PC-9 (cell line): ENCODE measurements at regions of chr14 and their contacts with region 1.

Region 1: DNA sequence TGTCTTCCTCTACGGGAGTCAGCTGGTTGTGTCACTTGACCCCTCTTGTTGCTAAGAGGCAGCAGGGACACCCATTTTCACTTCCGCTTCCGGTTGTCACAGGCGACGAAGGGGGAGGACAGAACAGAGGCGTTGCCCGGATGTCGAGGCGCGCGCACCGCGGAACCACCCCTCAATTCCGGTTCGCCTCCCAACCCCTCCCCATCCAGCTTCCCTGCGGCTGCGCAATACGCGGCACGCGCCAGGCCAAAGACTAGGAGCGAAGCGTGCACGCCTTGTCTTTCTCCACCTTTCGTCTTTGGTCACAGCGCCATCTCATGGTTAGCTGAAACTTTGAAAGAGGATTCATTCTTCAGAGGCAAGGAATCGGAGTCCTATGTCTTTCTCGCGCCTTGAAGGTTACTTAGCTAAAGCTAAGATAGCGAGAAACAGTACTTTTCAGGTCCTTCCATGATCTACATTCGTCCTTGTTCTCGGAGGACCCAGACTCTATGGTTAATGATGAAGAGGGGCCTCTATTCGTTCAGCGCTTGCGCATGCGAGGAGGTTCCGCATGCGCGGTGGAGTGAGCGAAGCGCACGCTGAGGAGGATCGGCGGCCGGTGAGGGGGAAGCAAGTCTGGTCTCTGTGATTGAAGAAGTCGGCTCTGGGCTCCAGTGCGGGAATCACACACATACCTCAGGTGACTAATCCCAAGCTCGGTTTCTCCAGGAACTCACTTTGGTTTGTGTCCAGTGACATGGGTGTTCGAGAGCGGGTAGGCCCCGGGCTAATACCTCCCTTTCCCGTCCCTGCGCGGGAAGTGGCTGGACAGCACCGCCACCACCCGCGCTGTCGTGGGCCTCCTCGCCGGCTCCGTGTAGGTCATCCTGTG is at the starts of genes ATP6V1D and EIF2S1:
- DNase-seq: peak; percentile 97 to 100
- H3K4me3 ChIP-seq: peak within 1 kb of the TSS; percentile 75
- H3K27ac ChIP-seq: peak within 1 kb of the TSS; percentile 71
- H3K4me1 ChIP-seq: peaks cover 44% of the 10 kb centered on the region
- H3K27me3 ChIP-seq: no peaks in the 10 kb centered on the region
- CTCF ChIP-seq: peak; percentile 100
- total RNA-seq, gene ATP6V1D: 62.7 and 67.9 TPM in 2 replicates
- total RNA-seq, gene EIF2S1: 144 and 146 TPM in 2 replicates

Region 2: GRCh38 chr14:66507722-66508546 is 852.1 kb before region 1 on chr14 and contains the start of gene GPHN:
- CTCF ChIA-PET with region 1: no interaction called
- POLR2A ChIA-PET with region 1: interaction called, 4 read pairs
- intact Hi-C with region 1: loop called (anchors 5 kb)
- DNase-seq: peak; percentile 94 to 98
- H3K4me3 ChIP-seq: peak within 1 kb of the TSS; percentile 76
- H3K27ac ChIP-seq: peak within 1 kb of the TSS; percentile 79
- H3K4me1 ChIP-seq: peaks cover 33% of the 10 kb centered on the region
- H3K27me3 ChIP-seq: no peaks in the 10 kb centered on the region
- CTCF ChIP-seq: peak; percentile 26; the same call in 1 of the 2 replicates
- total RNA-seq, gene GPHN: 18.3 and 20.5 TPM in 2 replicates

Region 3: DNA sequence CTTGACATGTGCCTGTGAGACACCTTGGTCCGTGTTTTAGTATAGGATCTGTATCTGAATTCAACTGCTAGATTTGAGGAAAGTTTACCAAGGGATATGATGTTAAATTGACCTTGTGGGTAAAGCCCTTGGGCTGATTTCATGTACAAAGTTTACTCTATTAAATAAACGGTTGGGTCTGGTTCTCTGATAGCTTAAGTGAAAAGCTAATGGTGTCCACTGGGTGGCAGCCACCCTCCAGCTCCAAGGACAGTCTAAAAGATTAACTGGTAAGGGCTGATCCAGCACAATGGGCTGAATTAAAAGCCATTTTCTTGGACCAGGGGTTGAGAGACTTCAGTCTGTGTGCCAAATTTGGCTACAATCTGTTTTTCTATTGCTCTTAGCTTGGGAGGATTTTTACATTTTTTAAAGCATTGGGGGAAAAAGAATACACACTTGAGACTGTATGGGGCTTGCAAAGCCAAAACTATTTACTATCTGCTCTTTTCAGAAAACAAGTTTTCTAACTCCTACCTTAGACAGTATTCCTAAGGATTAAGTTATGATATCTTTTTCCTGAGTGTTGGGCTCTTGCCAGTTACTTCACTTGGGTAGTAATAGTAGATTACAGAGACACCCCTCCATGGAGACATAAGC is 735.6 kb before region 1 on chr14:
- CTCF ChIA-PET with region 1: no interaction called
- POLR2A ChIA-PET with region 1: no interaction called
- intact Hi-C with region 1: loop called (anchors 1 kb)
- DNase-seq: peak in 1 of 2 experiments; percentile 53
- H3K4me3 ChIP-seq: no peak overlapping the region
- H3K27ac ChIP-seq: no peak overlapping the region
- H3K4me1 ChIP-seq: no peaks in the 10 kb centered on the region
- H3K27me3 ChIP-seq: no peaks in the 10 kb centered on the region
- CTCF ChIP-seq: peak; percentile 83

Region 4: DNA sequence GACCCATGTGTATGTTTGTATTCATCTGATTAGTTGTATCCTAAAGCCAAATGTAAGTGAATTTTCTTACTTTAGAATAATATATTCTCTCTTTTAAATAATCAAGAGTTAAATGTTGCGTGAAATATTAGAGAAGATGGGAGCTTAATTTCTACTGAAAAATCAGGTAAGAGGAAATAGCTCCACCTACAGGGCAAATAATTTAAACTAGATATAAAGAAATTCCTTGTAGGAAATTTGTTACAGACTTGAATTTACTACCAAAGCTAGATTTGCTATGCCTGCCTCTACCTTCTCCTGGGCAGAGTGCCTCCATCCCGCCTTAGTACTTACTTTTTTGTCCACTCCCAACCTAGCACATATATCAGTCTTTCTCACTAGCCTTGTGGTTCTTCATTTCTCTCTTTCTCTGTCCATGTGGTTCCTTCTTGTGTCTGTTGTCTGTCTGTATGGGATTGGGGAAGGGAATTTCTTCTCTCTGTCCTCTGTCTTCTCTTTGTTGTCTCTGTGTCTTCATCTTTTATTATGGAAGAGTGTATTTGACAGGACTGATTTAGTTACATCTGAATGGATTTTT is 74.0 kb before region 1 on chr14:
- CTCF ChIA-PET with region 1: no interaction called
- POLR2A ChIA-PET with region 1: no interaction called
- intact Hi-C with region 1: no loop called
- DNase-seq: peak in 1 of 2 experiments; percentile 56
- H3K4me3 ChIP-seq: no peak overlapping the region
- H3K27ac ChIP-seq: no peak overlapping the region
- H3K4me1 ChIP-seq: no peaks in the 10 kb centered on the region
- H3K27me3 ChIP-seq: no peaks in the 10 kb centered on the region
- CTCF ChIP-seq: peak; percentile 89

Region 5: DNA sequence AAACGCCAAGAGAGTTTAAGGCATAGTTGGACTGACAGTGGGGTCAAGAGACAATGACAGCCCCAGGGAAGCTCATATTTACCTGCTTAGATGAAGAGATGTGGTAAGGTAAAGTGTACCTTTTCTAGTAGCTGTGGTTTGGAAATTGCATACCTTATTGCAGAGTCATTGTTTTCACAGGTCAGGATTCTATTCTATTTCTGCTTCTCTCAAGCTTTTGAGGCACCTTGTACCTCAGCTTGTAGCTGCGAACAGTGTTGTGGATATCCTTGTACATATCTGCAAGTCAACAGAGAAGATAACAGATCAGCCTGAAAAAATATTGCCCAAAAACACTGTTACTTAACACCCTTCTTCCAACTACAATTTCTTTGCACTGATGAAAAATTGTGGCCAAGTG is 48.1 kb before region 1 on chr14:
- CTCF ChIA-PET with region 1: no interaction called
- POLR2A ChIA-PET with region 1: no interaction called
- intact Hi-C with region 1: loop called (anchors 2 kb)
- DNase-seq: peak; percentile 33 to 95
- H3K4me3 ChIP-seq: no peak overlapping the region
- H3K27ac ChIP-seq: no peak overlapping the region
- H3K4me1 ChIP-seq: peaks cover 25% of the 10 kb centered on the region
- H3K27me3 ChIP-seq: no peaks in the 10 kb centered on the region
- CTCF ChIP-seq: no peak

Region 6: GRCh38 chr14:68291820-68292219 is 931.8 kb after region 1 on chr14:
- CTCF ChIA-PET with region 1: no interaction called
- POLR2A ChIA-PET with region 1: interaction called, 21 read pairs
- intact Hi-C with region 1: no loop called
- DNase-seq: peak; percentile 21 to 37
- H3K4me3 ChIP-seq: no peak overlapping the region
- H3K27ac ChIP-seq: no peak overlapping the region; the same call in 1 of the 2 replicates
- H3K4me1 ChIP-seq: peaks cover 12% of the 10 kb centered on the region
- H3K27me3 ChIP-seq: no peaks in the 10 kb centered on the region
- CTCF ChIP-seq: no peak